Upper lobe of right lung (tissue), 1 donor: ENCODE measurements at regions of chr10 and their contacts with region 1.

Region 1: DNA sequence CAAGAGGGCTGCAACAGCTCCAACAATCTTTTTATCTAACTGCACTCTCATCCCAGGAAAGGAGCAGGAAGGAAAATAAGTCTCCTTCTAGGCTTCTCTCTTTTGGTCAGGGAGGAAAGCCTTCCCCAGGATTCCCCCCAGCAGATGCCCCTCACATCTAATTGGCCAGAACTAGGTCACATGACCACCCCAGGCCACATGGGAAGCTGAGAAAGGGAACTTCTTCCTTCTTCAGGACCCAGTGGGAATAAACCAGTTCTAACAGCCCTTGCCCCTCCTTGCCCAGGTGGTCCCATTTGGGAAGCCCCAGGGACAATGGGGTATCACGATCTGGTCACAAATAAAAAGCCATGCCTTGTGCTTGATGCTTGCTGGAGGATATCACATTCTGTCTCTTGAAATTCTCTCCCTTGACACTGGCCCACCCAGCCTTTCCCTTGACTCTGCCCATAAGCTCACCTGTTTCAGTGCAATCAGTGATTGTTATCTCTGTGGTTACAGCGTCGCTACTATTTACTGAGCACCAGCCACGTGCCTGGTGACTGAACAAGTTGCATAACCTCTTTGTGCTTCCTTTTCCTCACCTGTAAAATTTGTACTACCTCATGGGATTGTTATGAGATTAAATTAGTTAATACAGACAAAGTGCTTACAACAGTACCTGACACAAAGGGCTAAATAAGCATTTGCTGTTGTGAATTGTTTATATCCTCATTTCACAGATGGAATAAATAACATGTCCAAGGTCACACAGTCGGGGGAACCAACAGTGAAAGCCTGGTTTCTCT is 9.0 kb upstream of the TACR2 start:
- DNase-seq: no peak
- ATAC-seq: peak; percentile 50
- H3K4me3 ChIP-seq: no peak overlapping the region
- H3K27ac ChIP-seq: peak overlapping the region; percentile 47
- H3K4me1 ChIP-seq: peaks cover 11% of the 10 kb centered on the region
- H3K27me3 ChIP-seq: no peaks in the 10 kb centered on the region
- CTCF ChIP-seq: no peak

Region 2: GRCh38 chr10:69506834-69507721 is 81.4 kb after region 1 on chr10:
- intact Hi-C with region 1: loop called (anchors 5 kb)
- DNase-seq: no peak
- ATAC-seq: peak; percentile 3
- H3K4me3 ChIP-seq: no peak overlapping the region
- H3K27ac ChIP-seq: peak overlapping the region; percentile 14
- H3K4me1 ChIP-seq: peaks cover 4% of the 10 kb centered on the region
- H3K27me3 ChIP-seq: no peaks in the 10 kb centered on the region
- CTCF ChIP-seq: no peak

Region 3: GRCh38 chr10:69517271-69517848 is 91.7 kb after region 1 on chr10:
- intact Hi-C with region 1: no loop called
- DNase-seq: no peak
- ATAC-seq: no peak
- H3K4me3 ChIP-seq: no peak overlapping the region
- H3K27ac ChIP-seq: no peak overlapping the region
- H3K4me1 ChIP-seq: no peaks in the 10 kb centered on the region
- H3K27me3 ChIP-seq: no peaks in the 10 kb centered on the region
- CTCF ChIP-seq: no peak

Region 4: DNA sequence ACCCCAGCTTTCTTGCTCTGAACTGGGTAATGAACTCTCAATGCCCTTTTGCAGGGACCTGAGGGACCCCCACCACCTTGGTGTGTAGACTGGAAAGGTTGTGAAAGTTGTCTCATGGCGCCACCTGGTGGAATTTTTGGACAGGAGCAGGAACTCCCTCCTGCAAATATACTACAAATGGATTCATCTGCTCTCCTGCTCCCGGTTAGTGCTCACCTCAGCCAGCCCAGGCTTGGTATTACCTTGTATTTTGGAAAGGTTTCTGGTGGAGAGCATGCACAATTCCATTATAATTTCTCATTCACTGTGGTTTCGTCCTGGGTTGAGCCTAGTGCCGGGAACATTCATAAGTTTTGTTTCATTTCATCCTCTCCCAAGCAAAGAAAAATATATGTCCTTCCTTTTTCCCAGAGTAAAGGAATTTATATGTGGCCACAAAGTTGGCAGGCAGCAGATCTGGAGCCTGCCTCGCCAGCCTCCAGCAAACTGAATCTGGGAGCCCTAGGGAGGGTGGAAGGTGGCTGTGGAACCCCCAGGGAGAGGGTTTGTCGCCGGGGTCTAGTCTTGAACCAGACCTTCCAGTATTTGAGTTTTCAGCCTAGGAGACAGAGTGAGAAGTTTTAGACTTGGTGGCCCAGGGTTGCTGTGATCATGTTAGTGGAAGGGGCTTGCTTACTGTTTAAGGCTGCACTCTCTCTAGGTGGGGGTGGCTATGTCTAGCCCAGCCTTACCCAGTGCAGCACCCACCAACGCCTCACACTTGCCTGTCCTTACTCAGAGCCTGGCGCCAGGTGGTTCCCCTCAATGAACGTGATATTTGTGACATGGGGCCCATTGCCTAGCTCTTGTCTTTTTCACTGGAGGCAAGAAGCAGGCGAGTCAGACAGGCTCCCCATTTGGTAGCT is 213.8 kb after region 1 on chr10:
- intact Hi-C with region 1: loop called (anchors 10 kb)
- DNase-seq: peak; percentile 54
- ATAC-seq: peak; percentile 59
- H3K4me3 ChIP-seq: no peak overlapping the region
- H3K27ac ChIP-seq: no peak overlapping the region
- H3K4me1 ChIP-seq: no peaks in the 10 kb centered on the region
- H3K27me3 ChIP-seq: peaks cover 9% of the 10 kb centered on the region
- CTCF ChIP-seq: peak; percentile 89